CD14-positive monocyte (primary cell): ENCODE measurements at regions of chr21 and their contacts with region 1.

Region 1: GRCh38 chr21:45554477-45555175 is 12.4 kb upstream of the SLC19A1 start:
- DNase-seq: peak; percentile 64 to 74 (median 65)
- H3K4me3 ChIP-seq: peak overlapping the region; percentile 67 to 95 (median 90)
- H3K4me3 Mint-ChIP-seq: peak overlapping the region; percentile 95 to 96
- H3K27ac ChIP-seq: peak overlapping the region; percentile 71 to 97
- H3K27ac Mint-ChIP-seq: peak overlapping the region; percentile 96 to 99 (median 98)
- H3K4me1 ChIP-seq: peaks cover 40 to 43% of the 10 kb centered on the region in 2 donors
- H3K4me1 Mint-ChIP-seq: peaks cover 36% of the 10 kb centered on the region
- H3K27me3 ChIP-seq: no peaks in the 10 kb centered on the region
- H3K27me3 Mint-ChIP-seq: peaks cover 0 to 12% (median 6%) of the 10 kb centered on the region in 3 donors
- CTCF ChIP-seq: peak; percentile 78

Region 2: DNA sequence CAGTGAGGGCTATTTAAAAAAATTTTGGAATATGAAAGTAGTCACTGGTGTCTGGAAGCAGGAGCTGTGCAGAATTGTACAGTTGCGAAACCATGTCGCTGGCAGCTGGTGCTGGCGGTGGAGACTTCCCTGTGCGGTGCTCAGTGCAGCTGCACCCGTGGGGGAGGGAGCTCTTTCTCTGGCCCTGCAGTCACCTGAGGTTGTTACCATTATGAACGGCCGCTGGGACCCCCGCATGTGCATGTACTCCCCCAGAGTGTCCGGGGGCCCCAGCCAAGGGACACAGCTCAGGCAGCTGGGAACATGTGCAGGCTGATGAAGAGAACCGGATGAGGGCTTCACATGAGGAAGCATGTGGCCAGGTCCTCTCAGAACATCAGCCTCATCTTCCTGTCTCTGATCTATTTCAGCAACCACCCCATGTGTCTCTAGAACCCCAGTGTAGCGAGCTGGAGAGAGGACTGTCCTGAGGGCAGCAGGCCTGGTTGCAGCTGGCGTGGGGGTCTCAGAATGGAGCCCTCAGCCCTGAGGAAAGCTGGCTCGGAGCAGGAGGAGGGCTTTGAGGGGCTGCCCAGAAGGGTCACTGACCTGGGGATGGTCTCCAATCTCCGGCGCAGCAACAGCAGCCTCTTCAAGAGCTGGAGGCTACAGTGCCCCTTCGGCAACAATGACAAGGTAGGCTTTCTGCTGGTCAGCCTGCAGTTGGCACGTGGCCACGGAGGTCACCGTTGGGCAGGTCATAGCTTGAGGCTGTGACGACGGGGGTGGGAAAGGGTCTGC is 1201.2 kb before region 1 on chr21 and contains the start of gene TRPM2:
- intact Hi-C with region 1: loop called in 1 of 2 experiments (anchors 5 kb)
- DNase-seq: peak; percentile 79 to 88 (median 85)
- H3K4me3 ChIP-seq: peak within 1 kb of the TSS; percentile 23 to 77 (median 45)
- H3K4me3 Mint-ChIP-seq: peak within 1 kb of the TSS; percentile 83 to 91
- H3K27ac ChIP-seq: peak within 1 kb of the TSS; percentile 97 to 99
- H3K27ac Mint-ChIP-seq: peak within 1 kb of the TSS; percentile 91 to 99 (median 98)
- H3K4me1 ChIP-seq: peaks cover 70 to 90% of the 10 kb centered on the region in 2 donors
- H3K4me1 Mint-ChIP-seq: peaks cover 68% of the 10 kb centered on the region
- H3K27me3 ChIP-seq: peaks cover 4 to 15% of the 10 kb centered on the region in 2 donors
- H3K27me3 Mint-ChIP-seq: peaks cover 15 to 29% (median 22%) of the 10 kb centered on the region in 3 donors
- CTCF ChIP-seq: no peak
- polyA plus RNA-seq, gene TRPM2: 7.6 to 21.6 (median 12.2) TPM

Region 3: DNA sequence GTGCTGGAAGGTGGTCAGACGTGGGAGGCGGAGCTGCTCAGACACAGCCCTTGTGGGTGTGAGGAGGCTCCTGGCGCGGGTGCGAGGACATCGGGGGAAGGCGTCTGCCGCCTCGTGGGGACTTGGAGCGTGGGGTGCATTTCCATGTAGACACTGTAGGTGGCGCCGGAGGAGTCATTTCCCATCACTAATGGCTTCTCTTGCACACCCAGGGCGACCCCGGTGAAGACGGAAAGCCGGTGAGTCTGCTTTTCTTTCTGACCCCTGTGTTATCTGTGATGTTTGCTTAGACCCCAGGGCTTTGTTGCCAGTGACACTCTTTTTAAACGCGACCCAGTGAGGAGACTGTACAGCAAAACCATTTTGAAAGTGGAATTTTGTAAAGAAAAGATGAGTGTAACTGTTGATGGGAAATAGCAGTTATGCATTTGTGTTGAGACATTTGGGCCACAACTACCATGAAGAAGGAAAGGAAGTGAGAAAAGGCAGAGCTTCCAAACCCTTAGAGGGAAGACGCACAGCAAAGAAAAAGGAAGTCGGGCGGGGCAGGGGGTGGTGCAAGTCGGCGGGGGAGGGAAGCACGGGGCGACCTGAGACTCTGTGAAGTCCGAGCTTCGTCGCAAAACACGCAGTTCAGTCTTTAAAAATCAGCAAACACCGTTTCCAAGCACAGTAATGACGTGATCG is 76.4 kb before region 1 on chr21:
- intact Hi-C with region 1: loop called in 1 of 2 experiments (anchors 5 kb)
- DNase-seq: peak; percentile 79 to 86 (median 85)
- H3K4me3 ChIP-seq: peak overlapping the region in 2 of 3 experiments; percentile 6 to 68
- H3K4me3 Mint-ChIP-seq: peak overlapping the region; percentile 69 to 86
- H3K27ac ChIP-seq: peak overlapping the region; percentile 80 to 91
- H3K27ac Mint-ChIP-seq: peak overlapping the region; percentile 94 to 98 (median 96)
- H3K4me1 ChIP-seq: peaks cover 50 to 51% of the 10 kb centered on the region in 2 donors
- H3K4me1 Mint-ChIP-seq: peaks cover 43% of the 10 kb centered on the region
- H3K27me3 ChIP-seq: no peaks in the 10 kb centered on the region
- H3K27me3 Mint-ChIP-seq: peaks cover 2 to 6% (median 5%) of the 10 kb centered on the region in 3 donors
- CTCF ChIP-seq: peak; percentile 92

Region 4: DNA sequence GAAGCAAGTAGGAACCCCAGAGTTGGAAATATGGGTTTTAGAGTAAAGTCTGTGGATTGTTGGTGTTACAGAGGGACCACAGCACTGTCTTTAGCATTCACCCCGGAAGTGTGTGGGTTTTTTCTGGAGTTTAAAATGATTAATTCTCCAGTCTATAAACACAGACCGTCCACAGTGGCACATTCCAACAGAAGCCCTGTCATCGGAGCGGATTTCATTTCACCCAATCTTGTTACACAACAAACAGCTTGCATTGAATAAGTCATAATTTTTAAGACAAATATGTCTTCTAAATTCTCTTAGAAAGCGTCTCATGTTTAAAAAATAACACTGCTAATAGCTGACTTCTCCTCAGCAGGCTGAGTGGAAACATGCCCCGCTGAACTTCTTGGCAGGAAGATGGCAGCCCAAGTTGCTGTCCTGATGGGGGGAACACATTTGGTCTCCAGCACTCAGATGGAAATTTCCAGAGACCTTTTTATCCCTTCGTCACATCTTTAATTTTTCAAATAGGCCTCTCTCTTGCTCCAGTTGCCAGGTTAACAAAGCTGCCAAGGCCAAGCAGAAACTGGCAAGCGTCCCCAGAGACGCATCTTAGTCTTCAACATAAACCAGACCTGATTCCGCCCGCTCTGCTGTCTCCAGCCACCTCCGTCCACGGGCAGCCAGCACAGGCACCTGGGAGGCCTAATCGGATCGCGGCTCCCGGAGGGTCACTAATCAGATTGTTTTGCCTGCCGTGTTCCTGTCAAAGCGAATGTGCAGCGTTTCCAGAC is 16.4 kb after region 1 on chr21:
- intact Hi-C with region 1: no loop called
- DNase-seq: no peak
- H3K4me3 ChIP-seq: no peak overlapping the region
- H3K4me3 Mint-ChIP-seq: no peak overlapping the region
- H3K27ac ChIP-seq: no peak overlapping the region
- H3K27ac Mint-ChIP-seq: no peak overlapping the region
- H3K4me1 ChIP-seq: no peaks in the 10 kb centered on the region
- H3K4me1 Mint-ChIP-seq: no peaks in the 10 kb centered on the region
- H3K27me3 ChIP-seq: peaks cover 2 to 4% of the 10 kb centered on the region in 2 donors
- H3K27me3 Mint-ChIP-seq: peaks cover 9 to 18% (median 11%) of the 10 kb centered on the region in 3 donors
- CTCF ChIP-seq: no peak

Region 5: DNA sequence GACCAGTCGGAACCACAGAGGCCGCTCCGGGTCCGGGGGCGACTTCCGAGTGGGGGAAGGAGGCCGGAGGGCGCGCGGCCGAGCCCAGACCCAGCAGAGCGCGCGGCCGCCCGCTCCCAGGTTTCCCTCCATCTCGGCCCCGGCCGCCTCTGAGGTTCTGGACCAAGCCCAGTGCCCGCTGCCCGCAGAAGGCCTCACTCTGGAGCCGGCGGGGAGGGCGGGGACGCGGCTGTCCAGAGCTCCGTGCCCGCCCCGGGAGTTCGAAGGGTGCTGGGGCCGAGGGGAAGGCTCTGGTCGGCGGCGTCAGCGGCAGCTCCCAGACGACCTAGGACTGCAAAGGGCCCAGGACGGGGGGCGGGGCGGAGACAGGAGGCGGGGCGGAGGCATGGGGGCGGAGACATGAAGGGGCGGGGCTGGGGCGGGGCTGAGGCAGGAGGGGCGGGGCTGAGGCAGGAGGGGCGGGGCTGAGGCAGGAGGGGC is 35.7 kb after region 1 on chr21:
- intact Hi-C with region 1: loop called (anchors 2 to 5 kb)
- DNase-seq: peak; percentile 42 to 75 (median 67)
- H3K4me3 ChIP-seq: peak overlapping the region; percentile 21 to 74 (median 35)
- H3K4me3 Mint-ChIP-seq: peak overlapping the region; percentile 58 to 68
- H3K27ac ChIP-seq: no peak overlapping the region
- H3K27ac Mint-ChIP-seq: no peak overlapping the region
- H3K4me1 ChIP-seq: peaks cover 9 to 17% of the 10 kb centered on the region in 2 donors
- H3K4me1 Mint-ChIP-seq: peaks cover 15% of the 10 kb centered on the region
- H3K27me3 ChIP-seq: peaks cover 16 to 34% of the 10 kb centered on the region in 2 donors
- H3K27me3 Mint-ChIP-seq: peaks cover 23 to 43% (median 31%) of the 10 kb centered on the region in 3 donors
- CTCF ChIP-seq: no peak

Region 6: DNA sequence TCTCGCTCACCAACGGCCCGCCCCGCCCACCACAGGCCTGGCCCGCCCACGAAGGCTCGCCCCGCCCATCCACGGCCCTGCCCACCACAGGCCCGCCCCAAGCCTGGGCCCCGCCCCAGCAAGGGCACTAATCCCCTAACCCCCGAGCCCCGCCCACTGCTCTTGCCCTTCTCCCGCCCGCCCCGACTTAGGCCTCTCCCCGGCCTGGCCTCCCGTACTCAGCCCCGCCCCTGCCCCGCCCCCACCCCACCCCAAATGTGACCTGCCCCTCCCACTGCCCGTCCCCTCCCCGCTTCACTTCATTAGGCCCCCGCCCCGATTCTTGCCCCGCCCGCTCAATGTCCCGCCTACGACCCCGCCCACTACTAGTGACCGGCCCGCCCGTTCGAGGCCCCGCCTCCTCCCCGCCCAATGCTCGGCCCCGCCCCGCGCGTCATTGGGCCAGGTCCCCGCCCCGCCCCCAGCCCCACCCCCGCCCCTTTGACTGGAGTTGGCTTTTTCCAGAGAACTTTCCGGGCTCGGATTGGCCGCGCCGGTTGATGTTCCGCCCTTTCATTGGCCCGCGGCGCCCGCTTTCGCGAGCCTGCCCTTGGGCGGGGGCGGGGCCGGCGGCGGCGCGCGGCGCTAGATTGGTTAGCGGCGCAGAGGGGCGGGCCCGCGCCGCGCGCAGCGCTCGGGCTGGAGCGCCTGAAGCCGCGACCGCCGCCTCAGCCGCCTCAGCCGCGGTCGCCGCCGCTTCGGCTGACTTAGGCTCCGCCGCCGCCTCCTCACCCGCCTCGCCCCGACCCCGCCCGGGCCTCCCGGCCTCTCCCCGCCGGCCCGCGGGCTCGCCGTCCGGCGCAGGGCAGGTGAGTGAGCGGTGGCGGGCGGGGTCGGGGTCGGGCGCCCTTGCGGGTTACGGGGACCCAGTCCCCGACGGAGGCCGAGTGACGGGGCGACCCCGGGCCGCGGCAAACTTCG is 88.7 kb after region 1 on chr21 and contains the start of gene PCBP3:
- intact Hi-C with region 1: loop called (anchors 2 to 10 kb)
- DNase-seq: peak; percentile 92 to 95 (median 93)
- H3K4me3 ChIP-seq: peak within 1 kb of the TSS in 2 of 3 experiments; percentile 46 to 63
- H3K4me3 Mint-ChIP-seq: peak within 1 kb of the TSS; percentile 74 to 87
- H3K27ac ChIP-seq: no peak within 1 kb of the TSS
- H3K27ac Mint-ChIP-seq: peak within 1 kb of the TSS in 1 of 7 donors; percentile 68
- H3K4me1 ChIP-seq: peaks cover 10 to 28% of the 10 kb centered on the region in 2 donors
- H3K4me1 Mint-ChIP-seq: peaks cover 24% of the 10 kb centered on the region
- H3K27me3 ChIP-seq: peaks cover 7 to 18% of the 10 kb centered on the region in 2 donors
- H3K27me3 Mint-ChIP-seq: peaks cover 17 to 26% (median 19%) of the 10 kb centered on the region in 3 donors
- CTCF ChIP-seq: no peak
- polyA plus RNA-seq, gene PCBP3: 0.34 to 0.49 TPM in 2 of 3 donors, not detected in the other